ENCODE measurements at regions of chr11 and their contacts with region 1.

Region 1: DNA sequence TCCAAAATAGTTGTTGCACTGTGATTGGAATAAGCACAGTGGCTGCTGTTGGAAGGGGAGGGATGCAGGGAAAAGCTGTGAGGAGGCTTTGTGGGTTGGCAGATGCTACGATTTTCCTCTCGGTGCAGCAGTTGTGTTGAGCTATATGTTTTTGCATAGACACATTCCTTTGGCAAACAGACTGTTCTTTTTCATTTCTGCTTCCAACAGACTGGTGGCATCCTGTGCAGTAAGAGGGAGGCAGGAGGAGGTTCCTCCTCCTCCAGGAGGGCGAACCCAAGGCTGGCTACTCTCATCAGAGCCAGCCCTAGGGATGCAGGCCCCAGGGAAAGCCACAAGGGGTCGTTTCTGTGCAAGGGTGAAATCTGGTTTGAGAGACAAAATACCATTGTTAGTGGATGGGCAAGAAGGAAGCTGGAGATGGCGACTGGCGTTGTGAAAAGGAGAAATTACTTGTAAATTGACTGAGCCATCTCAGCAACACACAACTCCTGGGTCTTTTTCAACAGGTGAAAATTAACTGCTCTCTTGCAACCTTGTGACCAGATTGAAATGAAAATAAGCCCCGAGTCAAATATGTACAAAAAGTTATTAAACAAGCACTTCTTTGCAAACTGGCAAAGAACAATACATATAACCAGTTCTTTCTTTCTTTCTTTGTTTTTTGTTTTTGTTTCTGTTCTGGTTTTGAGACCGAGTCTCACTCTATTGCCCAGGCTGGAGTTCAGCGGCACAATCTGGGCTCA is 26.5 kb upstream of the UBASH3B start:
- DNase-seq: no peak
- H3K4me3 ChIP-seq: no peak overlapping the region
- CTCF ChIP-seq: peak; percentile 89

Region 2: GRCh38 chr11:122322329-122322728 is 306.7 kb before region 1 on chr11:
- CTCF ChIA-PET with region 1: no interaction called
- POLR2A ChIA-PET with region 1: no interaction called
- DNase-seq: no peak
- H3K4me3 ChIP-seq: no peak overlapping the region
- CTCF ChIP-seq: no peak

Region 3: DNA sequence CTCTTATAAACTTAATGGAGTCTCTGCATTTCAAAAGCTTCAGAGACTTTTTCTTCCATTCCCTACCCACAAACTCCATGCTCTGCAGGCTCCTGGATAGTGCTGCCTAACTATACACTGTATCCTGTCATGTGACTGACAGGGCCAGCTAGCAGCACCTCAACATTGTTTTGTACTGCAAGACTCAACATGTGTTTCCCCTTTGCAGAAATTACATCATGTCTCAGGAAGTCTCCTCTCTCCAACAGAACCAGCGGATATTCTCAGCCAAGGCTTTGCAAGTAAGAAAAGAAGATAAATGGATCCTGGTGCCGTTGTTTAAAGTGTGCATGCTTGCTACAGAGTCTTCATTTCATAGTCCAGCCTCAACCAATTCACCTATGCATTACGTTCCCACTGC is 137.5 kb before region 1 on chr11:
- CTCF ChIA-PET with region 1: no interaction called
- POLR2A ChIA-PET with region 1: no interaction called
- DNase-seq: no peak
- H3K4me3 ChIP-seq: no peak overlapping the region
- CTCF ChIP-seq: no peak

Region 4: GRCh38 chr11:122617297-122617696 is 11.7 kb before region 1 on chr11:
- CTCF ChIA-PET with region 1: interaction called, 14 read pairs
- POLR2A ChIA-PET with region 1: no interaction called
- DNase-seq: no peak
- H3K4me3 ChIP-seq: no peak overlapping the region
- CTCF ChIP-seq: no peak

Region 5: DNA sequence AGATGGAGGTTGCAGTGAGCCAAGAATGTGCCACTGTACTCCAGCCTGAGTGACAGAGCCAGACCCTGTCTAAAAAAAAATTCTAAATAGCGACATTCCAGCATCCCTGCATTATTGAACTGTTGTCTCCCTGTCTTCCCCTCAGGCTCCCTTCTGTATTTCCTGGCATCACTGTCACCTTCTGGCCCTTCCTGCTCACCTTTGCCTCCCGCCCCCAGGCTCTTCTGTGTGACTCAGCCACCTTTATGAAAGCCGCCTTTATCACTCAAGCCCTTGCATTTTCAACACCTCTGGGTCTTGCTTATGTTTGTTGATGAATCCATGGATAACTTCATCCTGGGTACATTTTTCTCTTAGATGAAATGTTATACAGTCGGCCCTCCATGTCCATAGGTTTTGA is 47.7 kb after region 1 on chr11:
- CTCF ChIA-PET with region 1: no interaction called
- POLR2A ChIA-PET with region 1: no interaction called
- DNase-seq: no peak
- H3K4me3 ChIP-seq: no peak overlapping the region
- CTCF ChIP-seq: no peak

Region 6: DNA sequence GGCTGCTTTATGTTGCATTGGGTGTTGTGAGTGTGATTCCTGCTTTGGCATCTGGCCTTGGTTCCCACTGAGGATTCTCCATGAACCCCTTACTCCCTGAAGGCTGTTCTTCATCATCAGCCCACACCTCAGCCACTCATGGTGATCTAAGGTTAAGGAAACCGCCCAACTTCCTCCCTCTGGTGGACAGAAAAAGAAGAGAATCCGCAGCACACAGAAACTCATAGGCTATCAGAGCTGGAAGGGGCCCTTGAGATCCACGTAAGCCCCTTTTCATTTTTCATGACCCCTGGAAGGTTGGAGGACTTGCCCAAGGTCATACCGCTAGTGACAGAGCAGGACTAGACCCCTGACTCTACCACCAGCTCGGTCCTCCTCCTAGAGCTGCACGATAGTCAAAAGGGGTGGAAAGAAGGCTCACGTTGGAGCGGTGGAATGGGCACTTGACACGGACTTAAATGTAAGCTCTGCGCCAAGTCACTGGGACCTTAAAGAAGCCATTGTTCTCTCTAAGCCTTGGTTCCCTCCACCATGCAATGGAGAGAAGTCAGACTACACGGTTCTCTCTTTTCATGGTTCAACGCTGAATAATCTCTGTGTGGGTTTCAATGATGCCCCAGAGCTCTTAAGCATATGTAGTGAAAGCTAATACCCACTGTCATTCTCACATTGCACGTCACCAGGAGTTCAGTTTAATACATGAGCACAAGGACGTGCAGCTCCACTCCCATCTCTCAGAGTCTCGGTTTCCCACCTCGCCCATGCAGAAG is 125.8 kb after region 1 on chr11:
- CTCF ChIA-PET with region 1: interaction called, 29 read pairs
- POLR2A ChIA-PET with region 1: no interaction called
- DNase-seq: no peak
- H3K4me3 ChIP-seq: no peak overlapping the region
- CTCF ChIP-seq: peak; percentile 33

Region 7: DNA sequence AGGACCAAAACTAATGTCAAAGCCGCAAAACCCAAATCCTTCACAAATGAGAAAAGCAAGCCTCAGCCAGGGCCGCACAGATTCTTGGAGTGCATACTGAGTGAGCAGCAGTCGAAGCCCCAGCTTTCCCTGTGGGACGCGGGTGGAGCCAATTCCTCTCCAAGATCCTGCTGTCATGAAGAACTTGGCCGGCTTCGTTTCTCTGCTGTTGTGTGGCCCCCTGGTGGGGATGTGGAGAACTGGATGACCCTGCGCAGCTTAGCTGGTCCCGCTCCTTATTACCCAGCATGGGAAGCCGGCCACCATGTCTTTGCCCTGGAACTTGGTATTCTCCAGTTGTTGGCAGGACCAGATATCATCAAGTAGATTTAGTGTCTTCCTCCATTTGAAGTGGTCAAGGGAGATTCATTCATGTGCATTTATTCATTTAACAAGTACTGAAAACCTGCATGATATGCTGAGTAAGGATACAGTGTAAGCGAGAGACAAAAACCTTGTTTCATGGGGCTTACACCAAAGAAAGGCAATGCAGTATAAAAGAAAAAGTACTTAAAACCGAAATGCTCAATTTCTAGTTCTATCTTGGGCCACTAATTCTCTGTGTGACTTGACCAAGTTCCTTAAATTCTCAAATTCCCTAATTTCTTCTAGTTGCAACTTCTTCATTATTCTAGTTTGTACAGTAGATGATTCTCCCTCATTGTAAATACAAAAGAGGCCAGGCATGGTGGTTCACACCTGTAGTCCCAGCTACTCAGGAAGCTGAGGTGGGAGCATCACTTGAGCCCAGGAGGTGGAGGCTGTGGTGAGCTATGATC is 152.6 kb after region 1 on chr11:
- CTCF ChIA-PET with region 1: interaction called, 645 read pairs
- POLR2A ChIA-PET with region 1: interaction called, 3 read pairs
- DNase-seq: peak; percentile 71
- H3K4me3 ChIP-seq: no peak overlapping the region
- CTCF ChIP-seq: peak; percentile 92

Region 8: GRCh38 chr11:122808478-122808869 is 179.5 kb after region 1 on chr11:
- CTCF ChIA-PET with region 1: interaction called, 20 read pairs
- POLR2A ChIA-PET with region 1: no interaction called
- DNase-seq: no peak
- H3K4me3 ChIP-seq: no peak overlapping the region
- CTCF ChIP-seq: no peak

Region 9: GRCh38 chr11:122843281-122844141 is 214.5 kb after region 1 on chr11:
- CTCF ChIA-PET with region 1: interaction called, 17 read pairs
- POLR2A ChIA-PET with region 1: no interaction called
- DNase-seq: no peak
- H3K4me3 ChIP-seq: no peak overlapping the region
- CTCF ChIP-seq: no peak

Region 10: DNA sequence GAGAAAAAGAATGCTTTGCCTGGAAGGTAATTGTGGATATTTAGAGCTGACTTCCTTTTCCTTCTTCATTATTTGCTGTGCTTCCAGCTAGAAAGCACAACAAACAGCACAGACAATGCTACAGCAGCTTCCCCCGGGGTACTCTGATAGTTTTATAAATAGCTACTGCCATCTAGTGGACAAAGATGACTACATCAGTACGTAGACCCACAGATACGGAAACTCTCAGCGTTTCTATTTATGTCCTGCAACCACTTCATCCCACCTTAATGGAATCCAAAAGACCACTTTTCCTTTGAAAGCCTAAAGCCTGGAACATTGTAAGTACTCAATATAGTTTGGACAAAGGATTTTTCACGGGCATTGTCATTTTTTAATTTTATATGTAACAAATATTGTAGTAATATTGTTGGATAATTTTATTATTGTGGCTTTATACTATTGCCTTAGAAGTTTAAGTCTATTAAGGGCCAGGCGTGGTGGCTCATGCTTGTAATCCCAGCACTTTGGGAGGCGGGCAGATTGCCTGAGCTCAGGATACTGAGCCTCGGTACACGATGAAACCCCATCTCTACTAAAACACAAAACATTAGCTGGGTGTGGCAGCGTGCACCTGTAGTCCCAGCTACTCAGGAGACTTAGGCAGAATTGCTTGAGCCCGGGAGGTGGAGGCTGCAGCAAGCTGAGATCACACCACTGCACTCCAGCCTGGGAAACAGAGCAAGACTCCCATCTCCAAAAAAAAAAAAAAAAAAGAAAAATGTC is 425.5 kb after region 1 on chr11:
- CTCF ChIA-PET with region 1: interaction called, 13 read pairs
- POLR2A ChIA-PET with region 1: no interaction called
- DNase-seq: no peak
- H3K4me3 ChIP-seq: no peak overlapping the region
- CTCF ChIP-seq: peak; percentile 58